ENCODE measurements at regions of chr6 and their contacts with region 1.

Region 1: GRCh38 chr6:195861-196360 is 96.4 kb upstream of the DUSP22 start:
- DNase-seq: peak; percentile 38 to 79 (median 46)
- H3K4me3 ChIP-seq: no peak overlapping the region
- H3K4me3 Mint-ChIP-seq: peak overlapping the region in 5 of 8 donors; percentile 22 to 58 (median 47)
- H3K27ac ChIP-seq: no peak overlapping the region
- H3K27ac Mint-ChIP-seq: peak overlapping the region; percentile 2 to 83 (median 72)
- H3K4me1 ChIP-seq: peaks cover 33% of the 10 kb centered on the region
- H3K4me1 Mint-ChIP-seq: peaks cover 35 to 47% (median 39%) of the 10 kb centered on the region in 4 donors
- H3K27me3 ChIP-seq: no peaks in the 10 kb centered on the region
- H3K27me3 Mint-ChIP-seq: no peaks in the 10 kb centered on the region

Region 2: DNA sequence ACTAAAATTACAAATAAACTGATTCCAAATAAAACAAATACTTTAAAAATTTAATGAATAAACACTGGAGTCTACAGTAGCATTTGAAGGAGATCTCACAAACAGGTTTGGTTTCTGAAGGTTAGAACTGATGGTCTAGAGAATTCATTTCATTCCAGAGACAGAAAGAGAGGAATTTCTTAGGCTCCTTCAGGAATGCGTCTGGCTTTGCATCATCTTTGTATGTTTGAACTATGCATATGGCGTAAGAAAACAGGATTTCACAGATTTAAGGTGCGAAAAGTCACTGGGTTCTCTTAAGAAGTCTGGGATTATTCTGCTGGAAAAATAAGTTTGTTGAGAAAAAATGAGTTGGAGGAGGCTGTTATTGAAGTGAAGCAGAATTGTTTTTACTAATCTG is 43.5 kb before region 1 on chr6:
- CTCF ChIA-PET with region 1: no interaction called
- POLR2A ChIA-PET with region 1: no interaction called
- intact Hi-C with region 1: no loop called
- DNase-seq: no peak
- H3K4me3 ChIP-seq: no peak overlapping the region
- H3K4me3 Mint-ChIP-seq: no peak overlapping the region
- H3K27ac ChIP-seq: no peak overlapping the region
- H3K27ac Mint-ChIP-seq: no peak overlapping the region
- H3K4me1 ChIP-seq: no peaks in the 10 kb centered on the region
- H3K4me1 Mint-ChIP-seq: peaks cover 3 to 5% (median 4%) of the 10 kb centered on the region in 4 donors
- H3K27me3 ChIP-seq: no peaks in the 10 kb centered on the region
- H3K27me3 Mint-ChIP-seq: peaks cover 30 to 36% of the 10 kb centered on the region in 2 donors

Region 3: GRCh38 chr6:209432-210103 is 13.7 kb after region 1 on chr6:
- CTCF ChIA-PET with region 1: no interaction called
- POLR2A ChIA-PET with region 1: interaction called, 17 read pairs
- intact Hi-C with region 1: no loop called
- DNase-seq: peak; percentile 44 to 69 (median 49)
- H3K4me3 ChIP-seq: peak overlapping the region; percentile 68 to 73
- H3K4me3 Mint-ChIP-seq: peak overlapping the region; percentile 87 to 99 (median 94)
- H3K27ac ChIP-seq: no peak overlapping the region
- H3K27ac Mint-ChIP-seq: peak overlapping the region; percentile 58 to 96 (median 89)
- H3K4me1 ChIP-seq: peaks cover 14% of the 10 kb centered on the region
- H3K4me1 Mint-ChIP-seq: peaks cover 11 to 26% (median 19%) of the 10 kb centered on the region in 4 donors
- H3K27me3 ChIP-seq: no peaks in the 10 kb centered on the region
- H3K27me3 Mint-ChIP-seq: peaks cover 0 to 4% of the 10 kb centered on the region in 2 donors

Region 4: GRCh38 chr6:217048-217659 is 21.2 kb after region 1 on chr6:
- CTCF ChIA-PET with region 1: interaction called, 16 read pairs
- POLR2A ChIA-PET with region 1: interaction called, 17 read pairs
- intact Hi-C with region 1: no loop called
- DNase-seq: peak in 1 of 5 donors; percentile 13
- H3K4me3 ChIP-seq: no peak overlapping the region
- H3K4me3 Mint-ChIP-seq: no peak overlapping the region
- H3K27ac ChIP-seq: no peak overlapping the region
- H3K27ac Mint-ChIP-seq: peak overlapping the region in 2 of 7 donors; percentile 3 to 44
- H3K4me1 ChIP-seq: peaks cover 20% of the 10 kb centered on the region
- H3K4me1 Mint-ChIP-seq: peaks cover 14 to 50% (median 30%) of the 10 kb centered on the region in 4 donors
- H3K27me3 ChIP-seq: no peaks in the 10 kb centered on the region
- H3K27me3 Mint-ChIP-seq: no peaks in the 10 kb centered on the region

Region 5: GRCh38 chr6:235763-236360 is 40.0 kb after region 1 on chr6:
- CTCF ChIA-PET with region 1: no interaction called
- POLR2A ChIA-PET with region 1: no interaction called
- intact Hi-C with region 1: loop called (anchors 5 kb)
- DNase-seq: peak; percentile 48 to 63 (median 61)
- H3K4me3 ChIP-seq: peak overlapping the region; percentile 23 to 46
- H3K4me3 Mint-ChIP-seq: peak overlapping the region; percentile 65 to 79 (median 78)
- H3K27ac ChIP-seq: peak overlapping the region; percentile 25
- H3K27ac Mint-ChIP-seq: peak overlapping the region; percentile 82 to 94 (median 87)
- H3K4me1 ChIP-seq: peaks cover 25% of the 10 kb centered on the region
- H3K4me1 Mint-ChIP-seq: peaks cover 18 to 31% (median 23%) of the 10 kb centered on the region in 4 donors
- H3K27me3 ChIP-seq: no peaks in the 10 kb centered on the region
- H3K27me3 Mint-ChIP-seq: no peaks in the 10 kb centered on the region

Region 6: GRCh38 chr6:509676-510075 is 313.8 kb after region 1 on chr6:
- CTCF ChIA-PET with region 1: no interaction called
- POLR2A ChIA-PET with region 1: no interaction called
- intact Hi-C with region 1: no loop called
- DNase-seq: no peak
- H3K4me3 ChIP-seq: no peak overlapping the region
- H3K4me3 Mint-ChIP-seq: peak overlapping the region in 6 of 8 donors; percentile 37 to 67 (median 61)
- H3K27ac ChIP-seq: no peak overlapping the region
- H3K27ac Mint-ChIP-seq: peak overlapping the region in 6 of 7 donors; percentile 0 to 75 (median 64)
- H3K4me1 ChIP-seq: peaks cover 47% of the 10 kb centered on the region
- H3K4me1 Mint-ChIP-seq: peaks cover 55 to 87% (median 68%) of the 10 kb centered on the region in 4 donors
- H3K27me3 ChIP-seq: no peaks in the 10 kb centered on the region
- H3K27me3 Mint-ChIP-seq: no peaks in the 10 kb centered on the region